ENCODE measurements at regions of chr3 and their contacts with region 1.

Region 1: DNA sequence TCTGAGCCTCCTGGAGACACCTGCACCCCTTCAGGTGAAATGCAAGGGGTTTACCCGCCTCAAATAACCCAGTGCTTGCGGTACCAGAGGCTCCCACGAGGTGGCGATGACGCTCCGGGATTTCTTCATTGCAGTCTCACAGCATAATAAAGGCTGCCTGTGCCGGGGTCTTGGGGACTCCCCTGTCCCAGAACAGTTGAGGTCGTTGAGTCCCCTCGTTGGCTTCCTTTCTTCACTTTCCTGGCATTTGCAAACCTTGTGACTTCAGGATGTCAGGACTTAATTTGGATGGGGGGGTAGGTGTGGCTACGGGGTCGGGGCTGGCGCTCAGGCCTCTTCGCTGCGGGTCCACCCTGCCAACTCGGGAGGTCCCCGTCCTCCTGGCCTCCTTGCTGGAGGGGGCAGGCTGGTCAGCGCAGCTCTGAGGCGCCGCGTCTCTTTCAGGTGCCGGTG is 1.3 kb downstream of the GNAT1 start:
- DNase-seq: peak; percentile 61 to 74
- ATAC-seq: peak in 4 of 8 donors; percentile 22 to 43 (median 33)
- H3K4me3 ChIP-seq: no peak overlapping the region
- H3K27ac ChIP-seq: no peak overlapping the region
- H3K4me1 ChIP-seq: peaks cover 0 to 28% (median 21%) of the 10 kb centered on the region in 9 donors
- H3K27me3 ChIP-seq: peaks cover 17 to 44% (median 31%) of the 10 kb centered on the region in 7 donors
- CTCF ChIP-seq: peak; percentile 84 to 93 (median 88)

Region 2: DNA sequence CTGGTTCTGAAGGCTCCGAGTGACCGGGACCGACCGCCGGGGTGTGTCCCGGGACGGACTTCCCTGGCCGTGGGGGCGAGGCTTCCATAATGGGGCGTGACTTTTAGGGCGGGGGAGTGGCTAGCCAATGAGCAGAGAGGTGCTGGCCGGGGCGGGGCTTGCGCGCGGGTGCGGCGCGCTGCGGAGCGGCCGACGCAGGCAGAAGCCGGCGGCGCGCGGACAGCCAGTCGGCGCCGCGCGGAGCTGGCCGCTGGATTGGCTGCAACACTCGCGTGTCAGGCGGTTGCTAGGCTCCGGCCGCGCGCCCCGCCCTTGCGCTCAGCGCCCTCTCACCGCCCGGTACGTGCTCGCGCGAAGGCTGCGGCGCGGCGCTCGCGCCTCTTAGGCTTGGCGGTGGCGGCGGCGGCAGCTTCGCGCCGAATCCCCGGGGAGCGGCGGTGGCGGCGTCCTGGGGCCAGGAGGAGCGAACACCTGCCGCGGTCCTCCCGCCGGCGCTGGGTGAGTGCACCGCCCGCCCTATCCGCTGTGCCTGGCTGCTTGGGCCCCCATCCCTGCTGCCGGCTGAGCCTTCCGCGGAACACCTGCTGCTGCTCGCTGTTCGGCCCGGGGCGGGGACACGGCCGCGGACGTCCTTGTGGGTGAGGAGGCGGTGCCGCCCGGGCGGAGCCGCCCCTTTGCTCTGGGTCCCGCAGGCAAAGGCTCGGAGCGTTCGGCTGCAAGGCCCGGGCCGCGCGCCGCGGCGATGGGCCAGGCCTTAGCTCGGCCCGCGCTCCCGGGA is 722.6 kb before region 1 on chr3 and contains the start of gene DAG1:
- intact Hi-C with region 1: no loop called
- DNase-seq: peak; percentile 98 to 99
- ATAC-seq: peak; percentile 88 to 95 (median 92)
- H3K4me3 ChIP-seq: peak within 1 kb of the TSS; percentile 39 to 94 (median 80)
- H3K27ac ChIP-seq: peak within 1 kb of the TSS; percentile 86 to 100 (median 98)
- H3K4me1 ChIP-seq: peaks cover 14 to 49% (median 43%) of the 10 kb centered on the region in 9 donors
- H3K27me3 ChIP-seq: no peaks in the 10 kb centered on the region
- CTCF ChIP-seq: no peak
- total RNA-seq, gene DAG1: 118 to 173 (median 139) TPM

Region 3: GRCh38 chr3:50154840-50155474 is 37.8 kb before region 1 on chr3 and contains the start of gene SEMA3F:
- intact Hi-C with region 1: loop called in 4 of 10 experiments (anchors 1 to 5 kb)
- DNase-seq: peak; percentile 39 to 70
- ATAC-seq: peak; percentile 67 to 88 (median 82)
- H3K4me3 ChIP-seq: peak within 1 kb of the TSS; percentile 19 to 67 (median 60)
- H3K27ac ChIP-seq: peak within 1 kb of the TSS; percentile 68 to 91 (median 84)
- H3K4me1 ChIP-seq: peaks cover 5 to 45% (median 28%) of the 10 kb centered on the region in 9 donors
- H3K27me3 ChIP-seq: peaks cover 0 to 41% (median 0%) of the 10 kb centered on the region in 7 donors
- CTCF ChIP-seq: peak in 6 of 9 donors; percentile 5 to 48 (median 43)
- total RNA-seq, gene SEMA3F: 5.1 to 37.2 (median 10.2) TPM

Region 4: GRCh38 chr3:50272911-50273693 is 80.4 kb after region 1 on chr3:
- intact Hi-C with region 1: loop called in 9 of 10 experiments (anchors 1 to 5 kb)
- DNase-seq: peak; percentile 83 to 90
- ATAC-seq: peak; percentile 43 to 84 (median 70)
- H3K4me3 ChIP-seq: peak overlapping the region in 9 of 10 donors; percentile 18 to 54 (median 38)
- H3K27ac ChIP-seq: peak overlapping the region in 5 of 10 donors; percentile 1 to 44 (median 41)
- H3K4me1 ChIP-seq: peaks cover 2 to 60% (median 42%) of the 10 kb centered on the region in 9 donors
- H3K27me3 ChIP-seq: peaks cover 0 to 47% (median 10%) of the 10 kb centered on the region in 7 donors
- CTCF ChIP-seq: peak; percentile 96 to 99 (median 98)

Region 5: GRCh38 chr3:50298836-50299637 is 106.3 kb after region 1 on chr3 and contains the starts of genes HYAL3 and NAA80:
- intact Hi-C with region 1: no loop called
- DNase-seq: peak; percentile 99 to 100
- ATAC-seq: peak; percentile 86 to 91 (median 90)
- H3K4me3 ChIP-seq: peak within 1 kb of the TSS; percentile 52 to 82 (median 68)
- H3K27ac ChIP-seq: peak within 1 kb of the TSS; percentile 87 to 96 (median 95)
- H3K4me1 ChIP-seq: peaks cover 22 to 59% (median 52%) of the 10 kb centered on the region in 9 donors
- H3K27me3 ChIP-seq: no peaks in the 10 kb centered on the region
- CTCF ChIP-seq: peak in 8 of 9 donors; percentile 16 to 52 (median 42)
- total RNA-seq, gene HYAL3: 0.80 to 3.0 (median 1.9) TPM
- total RNA-seq, gene NAA80: 7.7 to 11.1 (median 8.2) TPM